ENCODE measurements at regions of chr13 and their contacts with region 1.

Region 1: GRCh38 chr13:84446972-84447639 is 564.8 kb upstream of the SLITRK1 start:
- DNase-seq: no peak
- H3K4me3 ChIP-seq: no peak overlapping the region
- CTCF ChIP-seq: no peak

Region 2: GRCh38 chr13:84491952-84492351 is 44.8 kb after region 1 on chr13:
- in situ Hi-C with region 1: no loop called
- DNase-seq: no peak
- H3K4me3 ChIP-seq: no peak overlapping the region
- CTCF ChIP-seq: no peak

Region 3: GRCh38 chr13:84536906-84537305 is 89.8 kb after region 1 on chr13:
- in situ Hi-C with region 1: loop called (anchors 5 kb)
- DNase-seq: no peak
- H3K4me3 ChIP-seq: no peak overlapping the region
- CTCF ChIP-seq: no peak

Measured in astrocyte of the cerebellum (primary cell).